Transverse colon (tissue), 4 donors: ENCODE measurements at regions of chr11 and their contacts with region 1.

Region 1: GRCh38 chr11:65180877-65181568 is 705 bp upstream of the CAPN1 start:
- DNase-seq: peak; percentile 73
- H3K4me3 ChIP-seq: peak overlapping the region; percentile 73 to 97 (median 86)
- H3K27ac ChIP-seq: peak overlapping the region; percentile 92 to 97 (median 94)
- H3K4me1 ChIP-seq: peaks cover 9 to 26% (median 22%) of the 10 kb centered on the region in 4 donors
- H3K27me3 ChIP-seq: no peaks in the 10 kb centered on the region
- CTCF ChIP-seq: peak; percentile 42 to 76 (median 51)
- EP300 ChIP-seq: no peak
- POLR2A ChIP-seq: peak; percentile 41

Region 2: GRCh38 chr11:65134386-65135253 is 46.4 kb before region 1 on chr11 and contains the start of gene SYVN1:
- in situ Hi-C with region 1: loop called in 1 of 4 experiments (anchors 10 kb)
- intact Hi-C with region 1: no loop called
- DNase-seq: peak; percentile 95
- H3K4me3 ChIP-seq: peak within 1 kb of the TSS; percentile 73 to 82 (median 78)
- H3K27ac ChIP-seq: peak within 1 kb of the TSS; percentile 94 to 97 (median 95)
- H3K4me1 ChIP-seq: peaks cover 17 to 39% (median 31%) of the 10 kb centered on the region in 4 donors
- H3K27me3 ChIP-seq: no peaks in the 10 kb centered on the region
- CTCF ChIP-seq: peak in 1 of 5 experiments; percentile 9
- EP300 ChIP-seq: no peak
- POLR2A ChIP-seq: peak; percentile 99
- total RNA-seq, gene SYVN1: 20.5 to 72.6 (median 51.9) TPM